ENCODE measurements at regions of chr5 and their contacts with region 1.

Region 1: DNA sequence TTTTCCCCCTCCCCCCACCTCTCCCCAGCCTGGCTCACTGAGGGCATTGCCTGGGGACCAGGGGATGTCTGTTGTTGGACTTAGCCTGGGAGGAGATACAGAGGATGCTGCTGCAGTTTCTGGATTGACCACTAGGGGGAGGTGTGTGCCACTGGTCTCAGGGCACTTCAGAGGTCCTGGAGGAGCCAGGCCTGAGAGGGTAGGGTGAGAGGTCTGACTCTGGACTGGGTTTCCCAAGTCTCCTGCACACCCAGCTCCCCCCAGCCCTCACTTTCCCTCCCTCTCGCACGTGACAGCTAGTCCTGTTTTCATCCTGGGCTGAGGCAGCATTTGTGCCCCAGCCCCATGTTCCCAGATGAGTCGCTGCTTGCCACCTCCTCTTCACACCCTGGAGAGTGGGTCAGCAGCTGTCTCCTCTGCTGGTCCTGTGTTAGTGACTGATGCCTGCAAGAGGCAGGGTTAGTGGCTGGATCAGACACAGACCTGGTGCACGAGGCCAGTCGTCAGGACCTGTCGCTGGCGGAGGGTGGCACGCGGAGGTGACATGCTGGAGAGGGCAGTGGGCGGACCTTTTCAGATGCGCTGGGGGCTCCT is 4.4 kb downstream of the IL3 start:
- DNase-seq: peak; percentile 90
- ATAC-seq: peak; percentile 75
- H3K4me3 Mint-ChIP-seq: no peak overlapping the region
- H3K27ac Mint-ChIP-seq: no peak overlapping the region
- H3K4me1 Mint-ChIP-seq: peaks cover 19% of the 10 kb centered on the region
- H3K27me3 Mint-ChIP-seq: no peaks in the 10 kb centered on the region

Region 2: GRCh38 chr5:131796793-131797693 is 267.8 kb before region 1 on chr5 and contains the start of gene FNIP1:
- CTCF ChIA-PET with region 1: no interaction called
- POLR2A ChIA-PET with region 1: no interaction called
- intact Hi-C with region 1: loop called in 1 of 2 experiments (anchors 2 kb)
- DNase-seq: peak; percentile 99
- ATAC-seq: peak; percentile 98
- H3K4me3 Mint-ChIP-seq: peak within 1 kb of the TSS; percentile 99
- H3K27ac Mint-ChIP-seq: peak within 1 kb of the TSS; percentile 91
- H3K4me1 Mint-ChIP-seq: peaks cover 28% of the 10 kb centered on the region
- H3K27me3 Mint-ChIP-seq: no peaks in the 10 kb centered on the region
- total RNA-seq, gene FNIP1: 14.2 to 16.3 TPM

Region 3: DNA sequence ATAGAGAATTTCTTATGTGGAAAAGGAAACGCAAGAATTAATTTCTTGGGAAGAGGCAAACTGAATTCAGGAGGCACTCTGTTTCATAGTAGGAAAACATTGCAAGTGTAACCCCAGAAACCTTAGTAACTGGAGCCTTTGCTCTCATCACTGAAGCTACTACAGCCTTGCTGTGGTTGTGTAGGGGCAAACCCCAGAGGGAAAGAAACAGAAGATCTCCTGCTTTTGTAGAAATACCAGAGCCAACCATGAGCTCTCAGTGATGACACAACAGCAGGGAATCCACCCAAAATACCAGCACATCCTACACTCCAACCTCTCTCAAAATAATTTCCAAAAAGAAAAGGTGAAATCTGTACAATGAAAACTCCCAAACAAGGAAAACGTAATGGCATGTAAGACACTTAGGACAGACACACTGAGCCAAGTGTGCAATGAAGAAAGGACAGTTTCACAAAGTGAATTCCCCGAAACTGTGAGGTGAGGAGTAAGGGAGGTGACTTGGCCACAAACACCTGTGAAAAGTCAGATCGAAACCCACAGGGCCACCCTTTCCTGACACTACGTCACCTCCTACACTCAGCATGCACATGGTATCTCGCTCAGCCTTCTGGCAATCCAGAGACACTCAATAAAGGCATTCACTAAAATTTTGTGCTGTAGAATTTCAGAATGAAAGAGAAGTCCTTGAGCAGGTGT is 44.8 kb before region 1 on chr5:
- CTCF ChIA-PET with region 1: interaction called, 17 read pairs
- POLR2A ChIA-PET with region 1: no interaction called
- intact Hi-C with region 1: loop called (anchors 2 kb)
- DNase-seq: peak; percentile 89
- ATAC-seq: peak; percentile 90
- H3K4me3 Mint-ChIP-seq: peak overlapping the region; percentile 35
- H3K27ac Mint-ChIP-seq: peak overlapping the region; percentile 91
- H3K4me1 Mint-ChIP-seq: peaks cover 41% of the 10 kb centered on the region
- H3K27me3 Mint-ChIP-seq: peaks cover 36% of the 10 kb centered on the region

Region 4: GRCh38 chr5:132114150-132115121 is 49.6 kb after region 1 on chr5:
- CTCF ChIA-PET with region 1: no interaction called
- POLR2A ChIA-PET with region 1: no interaction called
- intact Hi-C with region 1: no loop called
- DNase-seq: no peak
- ATAC-seq: peak; percentile 78
- H3K4me3 Mint-ChIP-seq: no peak overlapping the region
- H3K27ac Mint-ChIP-seq: peak overlapping the region; percentile 2
- H3K4me1 Mint-ChIP-seq: peaks cover 60% of the 10 kb centered on the region
- H3K27me3 Mint-ChIP-seq: no peaks in the 10 kb centered on the region

Region 5: GRCh38 chr5:132190161-132190817 is 125.5 kb after region 1 on chr5:
- CTCF ChIA-PET with region 1: interaction called, 6 read pairs
- POLR2A ChIA-PET with region 1: no interaction called
- intact Hi-C with region 1: loop called in 1 of 2 experiments (anchors 1 kb)
- DNase-seq: peak; percentile 17
- ATAC-seq: peak; percentile 100
- H3K4me3 Mint-ChIP-seq: no peak overlapping the region
- H3K27ac Mint-ChIP-seq: no peak overlapping the region
- H3K4me1 Mint-ChIP-seq: no peaks in the 10 kb centered on the region
- H3K27me3 Mint-ChIP-seq: peaks cover 9% of the 10 kb centered on the region

Region 6: DNA sequence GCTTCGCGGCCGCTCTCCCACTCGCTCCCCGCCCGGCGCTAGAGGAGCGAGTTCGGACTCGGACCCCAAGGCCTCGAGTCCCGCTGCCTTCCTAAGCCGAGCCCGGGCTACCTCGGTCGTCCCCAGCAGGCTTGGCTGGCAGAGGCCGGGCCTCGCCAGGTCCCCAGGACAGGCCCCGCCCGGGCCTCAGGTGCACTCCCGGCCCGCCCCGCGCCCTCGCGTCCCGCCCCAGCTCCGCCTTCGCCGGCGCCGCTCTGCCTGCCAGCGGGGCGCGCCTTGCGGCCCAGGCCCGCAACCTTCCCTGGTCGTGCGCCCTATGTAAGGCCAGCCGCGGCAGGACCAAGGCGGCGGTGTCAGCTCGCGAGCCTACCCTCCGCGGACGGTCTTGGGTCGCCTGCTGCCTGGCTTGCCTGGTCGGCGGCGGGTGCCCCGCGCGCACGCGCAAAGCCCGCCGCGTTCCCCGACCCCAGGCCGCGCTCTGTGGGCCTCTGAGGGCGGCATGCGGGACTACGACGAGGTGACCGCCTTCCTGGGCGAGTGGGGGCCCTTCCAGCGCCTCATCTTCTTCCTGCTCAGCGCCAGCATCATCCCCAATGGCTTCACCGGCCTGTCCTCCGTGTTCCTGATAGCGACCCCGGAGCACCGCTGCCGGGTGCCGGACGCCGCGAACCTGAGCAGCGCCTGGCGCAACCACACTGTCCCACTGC is 304.8 kb after region 1 on chr5 and contains the start of gene SLC22A5:
- CTCF ChIA-PET with region 1: interaction called, 3 read pairs
- POLR2A ChIA-PET with region 1: no interaction called
- intact Hi-C with region 1: loop called (anchors 2 to 5 kb)
- DNase-seq: peak; percentile 84
- ATAC-seq: peak; percentile 97
- H3K4me3 Mint-ChIP-seq: peak within 1 kb of the TSS; percentile 66
- H3K27ac Mint-ChIP-seq: peak within 1 kb of the TSS; percentile 80
- H3K4me1 Mint-ChIP-seq: peaks cover 24% of the 10 kb centered on the region
- H3K27me3 Mint-ChIP-seq: no peaks in the 10 kb centered on the region
- total RNA-seq, gene SLC22A5: 3.7 to 4.9 TPM